Psoas muscle (tissue), 8 donors: ENCODE measurements at regions of chr12 and their contacts with region 1.

Region 1: GRCh38 chr12:9707864-9708808 is 24.8 kb downstream of the CLECL1 start:
- DNase-seq: peak; percentile 28 to 48
- ATAC-seq: peak in 1 of 4 donors; percentile 60
- H3K4me3 ChIP-seq: no peak overlapping the region
- H3K27ac ChIP-seq: no peak overlapping the region
- H3K4me1 ChIP-seq: no peaks in the 10 kb centered on the region
- H3K27me3 ChIP-seq: no peaks in the 10 kb centered on the region
- CTCF ChIP-seq: peak; percentile 68

Region 2: GRCh38 chr12:9331218-9331626 is 376.9 kb before region 1 on chr12:
- intact Hi-C with region 1: loop called in 1 of 2 experiments (anchors 2 kb)
- DNase-seq: peak; percentile 51 to 65
- ATAC-seq: peak in 3 of 4 donors; percentile 62 to 80 (median 70)
- H3K4me3 ChIP-seq: no peak overlapping the region
- H3K27ac ChIP-seq: no peak overlapping the region
- H3K4me1 ChIP-seq: no peaks in the 10 kb centered on the region
- H3K27me3 ChIP-seq: no peaks in the 10 kb centered on the region
- CTCF ChIP-seq: peak; percentile 85

Region 3: DNA sequence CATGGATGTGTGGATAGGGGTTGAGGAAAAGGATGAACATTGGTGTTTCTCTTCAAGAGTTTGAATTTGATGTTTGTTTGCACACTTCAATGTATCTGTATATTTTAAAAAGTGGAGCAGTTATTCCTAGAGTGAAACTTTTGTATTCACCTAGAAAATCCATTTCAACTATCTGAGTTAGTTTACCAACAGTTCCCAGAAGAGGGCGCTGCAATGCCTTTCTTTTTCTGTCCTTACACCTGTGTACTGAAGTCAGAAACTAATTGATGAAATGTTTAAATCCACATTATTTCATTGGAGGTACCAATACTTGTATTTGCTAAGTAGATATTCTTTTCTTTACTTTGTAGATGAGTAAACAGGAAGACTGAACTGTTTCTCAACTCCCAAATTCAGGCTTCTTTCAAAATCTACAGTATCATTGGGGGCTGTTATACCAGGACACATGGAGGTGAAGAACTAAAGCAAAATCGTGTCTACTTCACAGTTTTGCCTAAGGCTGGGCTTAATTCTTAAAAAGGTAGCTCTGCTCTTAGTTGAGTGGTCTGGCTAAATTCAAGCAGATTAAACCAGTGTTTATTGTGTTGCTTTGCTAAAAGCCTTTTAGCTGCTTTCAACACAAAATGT is 73.8 kb before region 1 on chr12:
- intact Hi-C with region 1: loop called in 1 of 2 experiments (anchors 1 kb)
- DNase-seq: no peak
- ATAC-seq: no peak
- H3K4me3 ChIP-seq: no peak overlapping the region
- H3K27ac ChIP-seq: no peak overlapping the region
- H3K4me1 ChIP-seq: no peaks in the 10 kb centered on the region
- H3K27me3 ChIP-seq: no peaks in the 10 kb centered on the region
- CTCF ChIP-seq: peak; percentile 56

Region 4: DNA sequence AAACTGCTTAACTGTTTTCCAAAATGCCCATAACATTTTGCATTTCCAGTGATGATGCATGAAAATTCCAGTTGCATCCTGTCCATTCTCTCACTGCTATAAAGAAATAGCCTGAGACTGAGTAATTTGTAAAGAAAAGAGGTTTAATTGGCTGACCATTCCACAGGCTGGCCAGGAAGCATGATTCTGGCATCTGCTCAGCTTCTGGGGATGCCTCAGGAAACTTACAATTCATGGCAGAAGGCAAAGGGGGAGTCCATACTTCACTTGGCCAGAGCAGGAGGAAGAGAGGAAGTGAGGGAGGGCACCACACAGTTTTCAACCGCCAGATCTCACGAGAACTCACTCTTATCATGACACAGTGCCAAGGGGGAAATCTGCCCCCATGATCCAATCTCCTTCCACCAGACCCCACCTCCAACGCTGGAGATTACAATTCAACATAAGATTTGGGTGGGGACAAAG is 56.8 kb before region 1 on chr12:
- intact Hi-C with region 1: no loop called
- DNase-seq: no peak
- ATAC-seq: no peak
- H3K4me3 ChIP-seq: no peak overlapping the region
- H3K27ac ChIP-seq: peak overlapping the region; percentile 79
- H3K4me1 ChIP-seq: peaks cover 9% of the 10 kb centered on the region
- H3K27me3 ChIP-seq: no peaks in the 10 kb centered on the region
- CTCF ChIP-seq: no peak